Activated CD4-positive, alpha-beta T cell treated with anti-CD3 and anti-CD28 coated beads for 36 hours (primary cell): ENCODE measurements at regions of chr11 and their contacts with region 1.

Region 1: GRCh38 chr11:2269601-2270321 is 627 bp downstream of the ASCL2 start:
- DNase-seq: peak; percentile 73
- ATAC-seq: peak; percentile 20
- H3K4me3 Mint-ChIP-seq: peak overlapping the region; percentile 52
- H3K27ac Mint-ChIP-seq: no peak overlapping the region
- H3K4me1 Mint-ChIP-seq: peaks cover 22% of the 10 kb centered on the region
- H3K27me3 Mint-ChIP-seq: peaks cover 29% of the 10 kb centered on the region

Region 2: DNA sequence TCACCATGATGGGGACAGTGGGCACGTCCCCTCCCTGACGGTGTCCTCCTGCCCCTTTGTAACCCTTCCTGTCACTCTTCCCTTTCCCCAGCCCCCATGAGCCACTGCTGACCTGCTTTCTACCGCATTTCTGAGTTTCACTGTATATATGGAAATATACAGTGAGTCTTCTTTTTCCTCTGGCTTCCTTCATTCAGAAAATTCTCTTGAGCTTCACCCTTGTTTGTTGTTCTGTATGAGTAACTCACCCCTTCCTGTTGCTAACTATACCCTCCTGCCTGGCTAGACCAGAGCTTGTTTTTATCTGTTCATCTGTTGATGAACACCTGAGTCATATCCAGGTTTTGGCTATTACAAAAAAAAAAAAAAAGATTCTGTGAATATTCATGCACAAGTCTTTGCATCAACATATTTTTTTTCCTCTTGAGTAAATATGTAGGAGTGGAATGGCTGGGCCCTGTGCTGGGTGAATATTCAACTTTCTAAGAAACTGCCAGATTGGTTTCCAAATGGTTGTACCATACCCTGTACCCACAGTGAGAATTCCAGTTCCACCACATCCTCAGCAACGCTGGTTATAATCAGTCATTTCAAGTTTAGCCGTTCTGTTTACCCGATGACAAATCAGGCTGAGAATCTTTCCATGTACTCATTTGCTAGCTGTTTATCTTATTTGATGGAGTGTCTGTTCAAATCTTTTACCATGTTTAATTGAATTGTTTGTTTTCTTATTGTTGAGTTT is 192.5 kb before region 1 on chr11:
- CTCF ChIA-PET with region 1: no interaction called
- POLR2A ChIA-PET with region 1: interaction called, 3 read pairs
- intact Hi-C with region 1: loop called in 1 of 2 experiments (anchors 1 kb)
- DNase-seq: peak; percentile 77
- ATAC-seq: peak; percentile 93
- H3K4me3 Mint-ChIP-seq: no peak overlapping the region
- H3K27ac Mint-ChIP-seq: peak overlapping the region; percentile 84
- H3K4me1 Mint-ChIP-seq: peaks cover 21% of the 10 kb centered on the region
- H3K27me3 Mint-ChIP-seq: peaks cover 30% of the 10 kb centered on the region

Region 3: GRCh38 chr11:2142762-2143202 is 127.0 kb before region 1 on chr11:
- CTCF ChIA-PET with region 1: no interaction called
- POLR2A ChIA-PET with region 1: no interaction called
- intact Hi-C with region 1: loop called in 1 of 2 experiments (anchors 2 kb)
- DNase-seq: peak; percentile 71
- ATAC-seq: peak; percentile 96
- H3K4me3 Mint-ChIP-seq: peak overlapping the region; percentile 55
- H3K27ac Mint-ChIP-seq: no peak overlapping the region
- H3K4me1 Mint-ChIP-seq: peaks cover 31% of the 10 kb centered on the region
- H3K27me3 Mint-ChIP-seq: peaks cover 58% of the 10 kb centered on the region

Region 4: GRCh38 chr11:2298795-2299761 is 29.3 kb after region 1 on chr11:
- CTCF ChIA-PET with region 1: interaction called, 6 read pairs
- POLR2A ChIA-PET with region 1: no interaction called
- intact Hi-C with region 1: loop called in 1 of 2 experiments (anchors 1 kb)
- DNase-seq: peak; percentile 62
- ATAC-seq: no peak
- H3K4me3 Mint-ChIP-seq: no peak overlapping the region
- H3K27ac Mint-ChIP-seq: no peak overlapping the region
- H3K4me1 Mint-ChIP-seq: peaks cover 34% of the 10 kb centered on the region
- H3K27me3 Mint-ChIP-seq: no peaks in the 10 kb centered on the region

Region 5: DNA sequence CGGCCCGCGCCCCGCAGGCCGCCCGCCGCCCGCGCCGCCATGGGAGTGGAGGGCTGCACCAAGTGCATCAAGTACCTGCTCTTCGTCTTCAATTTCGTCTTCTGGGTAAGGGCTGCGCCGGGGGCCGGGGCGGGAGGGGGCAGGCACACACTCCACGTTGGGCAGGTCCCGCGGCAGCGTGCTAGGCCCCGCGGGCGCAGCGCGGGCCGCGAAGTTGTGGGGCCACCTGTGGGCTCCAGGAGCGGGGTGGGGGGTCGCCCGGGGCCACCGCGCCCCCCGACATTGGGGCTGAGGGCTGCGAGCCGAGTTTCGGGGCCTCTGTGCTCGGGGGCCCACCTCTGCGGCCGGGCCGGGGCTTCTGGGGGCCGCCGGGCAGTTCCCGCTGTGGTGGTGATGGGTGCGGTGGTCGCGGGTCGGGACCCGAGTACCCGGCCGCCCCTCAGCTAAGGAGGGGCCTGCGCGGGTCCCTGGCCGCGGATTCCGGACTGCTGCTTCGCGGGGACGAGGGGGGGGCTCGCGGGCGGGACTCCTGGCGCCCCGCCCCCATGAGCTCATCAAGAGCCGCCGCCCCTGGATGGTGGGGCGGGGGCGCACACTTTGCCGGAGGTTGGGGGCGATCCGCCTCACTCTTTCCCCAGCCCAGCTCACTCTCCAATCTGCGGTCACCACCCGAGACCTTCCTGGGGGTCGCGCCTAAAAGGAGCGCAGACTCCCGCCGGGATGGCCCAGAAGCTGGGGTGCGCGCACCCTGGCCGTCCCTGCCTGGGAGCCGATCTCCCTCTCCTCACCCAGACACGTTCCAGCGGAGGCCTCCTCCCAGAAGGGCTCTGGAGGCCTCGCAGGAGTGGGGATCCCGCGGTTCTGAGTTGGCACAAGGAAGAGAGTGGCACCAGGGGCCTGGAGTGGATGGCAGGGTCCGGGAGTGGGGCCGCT is 108.0 kb after region 1 on chr11:
- CTCF ChIA-PET with region 1: no interaction called
- POLR2A ChIA-PET with region 1: interaction called, 3 read pairs
- intact Hi-C with region 1: loop called in 1 of 2 experiments (anchors 1 kb)
- DNase-seq: peak; percentile 80
- ATAC-seq: peak; percentile 57
- H3K4me3 Mint-ChIP-seq: peak overlapping the region; percentile 86
- H3K27ac Mint-ChIP-seq: peak overlapping the region; percentile 75
- H3K4me1 Mint-ChIP-seq: peaks cover 28% of the 10 kb centered on the region
- H3K27me3 Mint-ChIP-seq: no peaks in the 10 kb centered on the region